ENCODE measurements at regions of chr6 and their contacts with region 1.

Region 1: DNA sequence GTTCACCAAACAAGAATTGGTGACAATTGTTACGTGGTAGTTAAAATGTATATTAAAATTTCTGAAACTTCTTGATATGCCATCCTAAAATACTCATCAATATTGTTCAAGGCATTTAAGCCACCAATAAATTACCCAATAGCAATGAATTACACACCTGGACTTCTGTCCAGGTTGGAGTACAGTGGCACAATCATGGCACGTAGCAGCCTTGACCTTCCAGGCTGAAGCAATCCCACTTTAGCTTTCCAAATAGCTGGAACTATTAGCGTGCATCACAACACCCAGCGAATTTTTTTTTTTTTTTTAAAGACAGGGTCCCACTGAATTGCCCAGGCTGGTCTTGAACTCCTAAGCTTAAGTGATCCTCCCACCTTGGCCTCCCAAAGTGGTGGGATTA is 17.2 kb downstream of the SRPK1 start:
- DNase-seq: no peak
- ATAC-seq: no peak
- H3K4me3 ChIP-seq: no peak overlapping the region
- H3K27ac ChIP-seq: no peak overlapping the region
- H3K4me1 ChIP-seq: no peaks in the 10 kb centered on the region; the same call in 1 of the 2 replicates
- H3K27me3 ChIP-seq: no peaks in the 10 kb centered on the region
- CTCF ChIP-seq: no peak
- EP300 ChIP-seq: no peak
- POLR2A ChIP-seq: no peak
- RAD21 ChIP-seq: no peak

Region 2: DNA sequence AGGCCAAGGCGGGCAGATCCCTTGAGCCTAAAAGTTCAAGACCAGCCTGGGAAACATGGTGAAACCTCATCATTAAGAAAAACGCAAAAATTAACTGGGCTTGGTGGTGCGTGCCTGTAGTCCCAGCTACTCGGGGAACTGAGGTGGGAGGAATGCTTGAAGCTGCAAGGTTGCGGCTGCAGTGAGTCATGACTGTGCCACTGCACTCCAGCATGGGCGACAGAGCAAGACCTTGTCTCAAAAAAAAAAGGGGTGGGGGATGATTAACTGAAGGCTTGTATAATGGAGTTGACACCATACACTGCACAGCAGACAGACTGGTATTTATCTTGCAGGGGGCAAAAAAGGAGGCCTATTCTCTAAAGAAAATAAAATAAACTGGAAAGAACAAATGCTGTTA is 10.4 kb before region 1 on chr6:
- CTCF ChIA-PET with region 1: interaction called, 7 read pairs
- POLR2A ChIA-PET with region 1: interaction called, 3 read pairs
- RAD21 ChIA-PET with region 1: no interaction called
- SMC1A ChIA-PET with region 1: interaction called, 10 read pairs
- in situ Hi-C with region 1: no loop called
- intact Hi-C with region 1: no loop called
- DNase-seq: no peak
- ATAC-seq: peak; percentile 64
- H3K4me3 ChIP-seq: no peak overlapping the region
- H3K27ac ChIP-seq: no peak overlapping the region
- H3K4me1 ChIP-seq: no peaks in the 10 kb centered on the region; the same call in 1 of the 2 replicates
- H3K27me3 ChIP-seq: no peaks in the 10 kb centered on the region
- CTCF ChIP-seq: no peak
- EP300 ChIP-seq: no peak
- POLR2A ChIP-seq: no peak
- RAD21 ChIP-seq: no peak

Region 3: GRCh38 chr6:35933844-35934243 is 30.2 kb after region 1 on chr6:
- CTCF ChIA-PET with region 1: no interaction called
- POLR2A ChIA-PET with region 1: no interaction called
- RAD21 ChIA-PET with region 1: no interaction called
- SMC1A ChIA-PET with region 1: no interaction called
- in situ Hi-C with region 1: no loop called
- intact Hi-C with region 1: no loop called
- DNase-seq: no peak
- ATAC-seq: no peak
- H3K4me3 ChIP-seq: no peak overlapping the region
- H3K27ac ChIP-seq: no peak overlapping the region
- H3K4me1 ChIP-seq: no peaks in the 10 kb centered on the region
- H3K27me3 ChIP-seq: no peaks in the 10 kb centered on the region; a peak in 1 of 4 replicates
- CTCF ChIP-seq: no peak
- EP300 ChIP-seq: no peak
- POLR2A ChIP-seq: no peak
- RAD21 ChIP-seq: no peak

Measured in GM12878 (cell line).